Left cardiac atrium (tissue), 4 donors: ENCODE measurements at regions of chr3 and their contacts with region 1.

Region 1: DNA sequence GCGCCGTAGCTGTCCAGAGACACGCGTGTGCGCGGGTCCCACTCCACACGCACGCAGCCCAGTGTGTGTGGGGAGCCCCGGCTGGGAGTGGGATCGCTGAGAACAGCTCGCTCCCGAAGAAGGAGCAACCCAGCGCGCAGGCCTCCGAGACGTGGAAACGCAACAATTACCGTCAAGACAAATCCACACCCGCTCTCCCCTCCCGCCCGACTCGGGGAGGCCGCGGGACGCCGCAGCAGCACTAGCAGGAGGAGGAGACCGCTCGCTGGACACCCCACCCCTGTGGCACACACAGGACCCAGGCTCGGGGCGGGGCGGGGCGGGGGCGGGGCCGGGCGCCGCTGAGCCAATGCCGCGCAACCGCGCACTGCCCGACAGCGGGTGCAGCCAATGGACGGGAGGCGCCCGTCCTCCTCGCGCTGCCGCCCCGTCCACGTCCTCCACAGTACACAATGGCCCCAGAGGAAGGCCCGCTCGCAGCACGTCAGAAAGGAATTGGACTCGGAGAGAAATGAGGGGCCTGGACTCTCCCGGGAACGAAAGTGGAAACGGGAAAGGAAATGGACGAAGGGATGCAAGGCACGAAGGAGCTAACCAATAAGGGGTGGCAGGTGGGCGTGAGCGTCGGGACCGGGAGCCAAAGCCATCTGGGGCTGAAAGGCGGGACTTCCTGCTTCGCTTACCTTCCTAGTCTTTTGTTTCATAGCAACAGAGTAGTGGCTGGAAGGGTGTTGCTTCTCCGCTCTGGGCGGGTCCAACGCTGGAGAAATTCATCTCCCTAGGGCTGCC is at the start of gene CBLB:
- DNase-seq: peak; percentile 94
- ATAC-seq: peak; percentile 95 to 98
- total RNA-seq, gene CBLB: 35.7 to 41.1 TPM

Region 2: GRCh38 chr3:105780107-105780506 is 88.8 kb before region 1 on chr3:
- intact Hi-C with region 1: no loop called
- DNase-seq: no peak
- ATAC-seq: no peak

Region 3: DNA sequence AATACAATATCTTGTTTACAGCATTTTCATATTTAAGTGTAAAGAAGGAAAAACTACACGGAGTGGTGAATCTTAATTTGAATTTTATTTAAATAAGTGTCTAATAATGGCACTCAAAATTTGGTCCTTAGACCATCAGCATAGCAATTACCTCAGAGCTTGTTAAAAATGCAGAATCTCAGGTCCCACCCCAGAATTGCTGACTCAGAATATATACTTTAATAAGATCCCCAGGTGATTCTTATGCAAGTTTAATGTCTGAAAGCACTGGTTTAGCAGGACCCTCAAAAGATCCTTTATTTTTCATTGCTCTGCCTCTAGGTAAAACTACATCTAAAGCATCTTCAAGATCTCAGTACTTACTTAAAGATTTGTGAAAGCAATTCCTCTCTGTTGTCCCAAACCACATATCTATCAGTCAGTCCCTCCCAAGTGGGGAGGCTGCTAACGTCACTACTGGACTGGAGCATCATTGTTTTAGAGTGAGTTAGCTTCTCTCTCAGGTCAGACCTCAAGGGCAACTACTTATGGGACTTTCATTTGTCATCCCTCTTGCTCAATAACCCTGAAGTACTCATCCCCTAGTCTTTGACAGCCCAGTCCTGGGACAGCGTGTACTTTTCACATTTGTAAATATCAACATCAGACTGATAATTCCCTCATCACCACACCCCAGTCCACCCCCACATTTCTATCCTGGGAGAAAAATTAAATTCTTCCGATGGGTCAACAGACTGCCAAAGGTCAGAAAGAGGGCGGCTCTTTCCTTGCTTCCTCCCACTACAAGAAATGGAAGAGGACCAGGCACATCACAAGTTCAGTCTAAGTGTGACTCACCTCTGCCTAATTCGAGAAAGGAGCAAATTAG is 76.8 kb before region 1 on chr3:
- intact Hi-C with region 1: loop called in 1 of 2 experiments (anchors 5 kb)
- DNase-seq: peak; percentile 78
- ATAC-seq: peak; percentile 93 to 96